Activated B cell treated with CpG ODN at 0.5 μM for 24 hours (primary cell): ENCODE measurements at regions of chr2 and their contacts with region 1.

Region 1: GRCh38 chr2:134320930-134321329 is 67.1 kb downstream of the MGAT5 start:
- DNase-seq: no peak
- ATAC-seq: peak; percentile 36
- H3K4me3 Mint-ChIP-seq: no peak overlapping the region
- H3K27ac Mint-ChIP-seq: peak overlapping the region; percentile 65
- H3K4me1 Mint-ChIP-seq: peaks cover 90% of the 10 kb centered on the region
- H3K27me3 Mint-ChIP-seq: no peaks in the 10 kb centered on the region
- CTCF ChIP-seq: no peak

Region 2: DNA sequence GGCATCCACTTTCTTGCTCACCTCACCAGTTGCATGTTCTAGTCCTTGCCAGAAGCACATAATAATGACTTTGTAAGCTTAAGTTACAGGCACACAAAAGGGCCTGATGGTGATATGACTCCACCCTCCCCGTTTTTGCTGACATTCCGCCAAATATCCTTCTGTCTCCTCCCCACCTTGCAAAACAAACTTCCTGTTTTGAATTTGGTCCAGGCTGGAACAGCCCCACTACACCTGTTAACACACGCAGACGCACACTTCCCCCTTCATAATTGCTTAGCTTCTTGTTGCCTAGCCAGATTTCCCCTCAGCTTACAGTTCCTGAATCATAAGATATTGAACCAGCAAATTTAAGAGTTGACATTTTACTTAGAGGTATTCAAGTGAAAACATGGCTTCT is 67.1 kb before region 1 on chr2 and contains the start of gene MGAT5:
- CTCF ChIA-PET with region 1: no interaction called
- POLR2A ChIA-PET with region 1: no interaction called
- intact Hi-C with region 1: no loop called
- DNase-seq: no peak
- ATAC-seq: peak; percentile 43
- H3K4me3 Mint-ChIP-seq: peak within 1 kb of the TSS; percentile 74
- H3K27ac Mint-ChIP-seq: peak within 1 kb of the TSS; percentile 95
- H3K4me1 Mint-ChIP-seq: peaks cover 95% of the 10 kb centered on the region
- H3K27me3 Mint-ChIP-seq: no peaks in the 10 kb centered on the region
- CTCF ChIP-seq: no peak
- total RNA-seq, gene MGAT5: 66.7 and 69.0 TPM in 2 replicates

Region 3: GRCh38 chr2:134307334-134307733 is 13.6 kb before region 1 on chr2:
- CTCF ChIA-PET with region 1: no interaction called
- POLR2A ChIA-PET with region 1: no interaction called
- intact Hi-C with region 1: loop called (anchors 2 kb)
- DNase-seq: no peak
- ATAC-seq: no peak
- H3K4me3 Mint-ChIP-seq: peak overlapping the region; percentile 35
- H3K27ac Mint-ChIP-seq: peak overlapping the region; percentile 46
- H3K4me1 Mint-ChIP-seq: peaks cover 89% of the 10 kb centered on the region
- H3K27me3 Mint-ChIP-seq: no peaks in the 10 kb centered on the region
- CTCF ChIP-seq: no peak

Region 4: DNA sequence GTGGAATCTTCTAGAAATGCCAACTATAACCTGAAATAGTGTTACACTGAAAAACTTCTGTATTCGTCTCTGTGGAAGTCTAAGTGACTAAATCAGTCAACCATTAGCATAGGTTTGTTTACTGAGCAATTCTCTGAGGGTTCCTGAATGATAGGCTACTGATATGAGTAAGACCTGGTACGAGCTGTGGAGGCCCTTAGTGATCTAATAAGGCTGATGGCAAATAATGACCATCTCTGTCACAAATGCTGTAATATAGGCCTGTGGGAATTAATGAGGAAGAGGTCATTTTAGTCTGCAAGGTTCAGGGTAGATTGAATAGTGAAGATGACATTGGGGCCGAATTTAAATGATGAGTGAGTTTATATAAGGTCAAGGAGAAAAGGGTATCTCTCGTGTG is 15.4 kb after region 1 on chr2:
- CTCF ChIA-PET with region 1: no interaction called
- POLR2A ChIA-PET with region 1: interaction called, 5 read pairs
- intact Hi-C with region 1: loop called (anchors 1 kb)
- DNase-seq: no peak
- ATAC-seq: peak; percentile 82
- H3K4me3 Mint-ChIP-seq: peak overlapping the region; percentile 12
- H3K27ac Mint-ChIP-seq: peak overlapping the region; percentile 57
- H3K4me1 Mint-ChIP-seq: peaks cover 64% of the 10 kb centered on the region
- H3K27me3 Mint-ChIP-seq: no peaks in the 10 kb centered on the region
- CTCF ChIP-seq: no peak

Region 5: GRCh38 chr2:134389381-134389780 is 68.5 kb after region 1 on chr2:
- CTCF ChIA-PET with region 1: no interaction called
- POLR2A ChIA-PET with region 1: no interaction called
- intact Hi-C with region 1: no loop called
- DNase-seq: no peak
- ATAC-seq: no peak
- H3K4me3 Mint-ChIP-seq: no peak overlapping the region
- H3K27ac Mint-ChIP-seq: no peak overlapping the region
- H3K4me1 Mint-ChIP-seq: peaks cover 27% of the 10 kb centered on the region
- H3K27me3 Mint-ChIP-seq: no peaks in the 10 kb centered on the region
- CTCF ChIP-seq: no peak